Activated CD8-positive, alpha-beta T cell treated with anti-CD3 and anti-CD28 coated beads for 36 hours (primary cell): ENCODE measurements at regions of chr1 and their contacts with region 1.

Region 1: GRCh38 chr1:43650310-43651085 is 549 bp downstream of the KDM4A start:
- DNase-seq: peak; percentile 98
- ATAC-seq: peak; percentile 81
- H3K4me3 Mint-ChIP-seq: peak overlapping the region; percentile 100
- H3K27ac Mint-ChIP-seq: peak overlapping the region; percentile 94
- H3K4me1 Mint-ChIP-seq: peaks cover 26% of the 10 kb centered on the region
- H3K27me3 Mint-ChIP-seq: peaks cover 1% of the 10 kb centered on the region
- CTCF ChIP-seq: no peak

Region 2: DNA sequence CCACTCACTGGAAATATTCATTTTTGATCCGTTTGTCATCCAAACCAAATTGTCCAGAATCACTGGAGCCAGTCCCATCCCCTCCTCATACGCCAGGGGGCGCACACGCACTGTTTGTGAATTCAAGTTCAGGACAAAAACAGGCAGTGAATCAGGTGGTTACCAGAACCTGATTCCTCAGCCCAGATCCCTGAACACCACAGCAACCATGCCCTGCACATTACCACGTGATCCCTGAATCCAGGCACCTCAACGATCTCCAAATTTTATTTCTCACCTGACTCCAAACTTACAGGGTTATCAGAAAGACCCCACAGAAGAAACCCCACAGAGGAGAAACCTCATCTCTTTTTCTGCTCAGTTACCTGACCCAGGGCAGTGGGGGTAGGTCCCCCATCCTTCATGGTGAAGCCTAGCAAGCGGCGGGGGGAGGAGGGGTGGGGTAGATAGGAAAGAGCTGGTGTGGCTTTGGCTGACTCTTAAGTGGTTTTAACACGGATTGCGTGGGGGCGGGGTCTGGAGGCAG is 121.2 kb before region 1 on chr1:
- CTCF ChIA-PET with region 1: interaction called, 18 read pairs
- POLR2A ChIA-PET with region 1: interaction called, 4 read pairs
- intact Hi-C with region 1: no loop called
- DNase-seq: peak; percentile 89
- ATAC-seq: peak; percentile 81
- H3K4me3 Mint-ChIP-seq: no peak overlapping the region
- H3K27ac Mint-ChIP-seq: no peak overlapping the region
- H3K4me1 Mint-ChIP-seq: peaks cover 14% of the 10 kb centered on the region
- H3K27me3 Mint-ChIP-seq: peaks cover 34% of the 10 kb centered on the region
- CTCF ChIP-seq: peak; percentile 95

Region 3: DNA sequence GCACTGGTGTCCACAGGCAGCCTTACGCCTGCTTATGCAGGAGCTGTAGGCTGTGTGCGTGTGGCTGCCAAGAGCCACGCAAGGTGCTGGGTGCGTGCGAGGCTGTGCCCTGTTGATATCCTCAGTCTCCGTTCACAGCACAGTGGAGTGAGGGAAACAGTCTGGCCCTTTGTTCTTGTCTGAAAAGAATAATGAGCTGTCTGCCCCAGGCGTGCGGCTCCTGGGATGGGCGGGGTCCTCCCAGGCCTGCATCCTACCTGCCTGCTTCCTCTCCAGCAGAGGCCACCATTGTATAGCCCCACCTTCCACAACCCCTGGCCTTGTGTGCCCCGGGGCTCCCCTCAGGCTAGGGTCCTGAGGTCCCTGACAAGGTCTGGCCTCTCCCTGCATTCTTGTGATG is 47.5 kb before region 1 on chr1:
- CTCF ChIA-PET with region 1: no interaction called
- POLR2A ChIA-PET with region 1: no interaction called
- intact Hi-C with region 1: no loop called
- DNase-seq: no peak
- ATAC-seq: no peak
- H3K4me3 Mint-ChIP-seq: no peak overlapping the region
- H3K27ac Mint-ChIP-seq: no peak overlapping the region
- H3K4me1 Mint-ChIP-seq: no peaks in the 10 kb centered on the region
- H3K27me3 Mint-ChIP-seq: no peaks in the 10 kb centered on the region
- CTCF ChIP-seq: no peak

Region 4: GRCh38 chr1:43622471-43622870 is 28.0 kb before region 1 on chr1:
- CTCF ChIA-PET with region 1: no interaction called
- POLR2A ChIA-PET with region 1: no interaction called
- intact Hi-C with region 1: no loop called
- DNase-seq: no peak
- ATAC-seq: no peak
- H3K4me3 Mint-ChIP-seq: no peak overlapping the region
- H3K27ac Mint-ChIP-seq: no peak overlapping the region
- H3K4me1 Mint-ChIP-seq: no peaks in the 10 kb centered on the region
- H3K27me3 Mint-ChIP-seq: no peaks in the 10 kb centered on the region
- CTCF ChIP-seq: no peak

Region 5: GRCh38 chr1:43666608-43667007 is 16.1 kb after region 1 on chr1:
- CTCF ChIA-PET with region 1: interaction called, 5 read pairs
- POLR2A ChIA-PET with region 1: interaction called, 23 read pairs
- intact Hi-C with region 1: no loop called
- DNase-seq: no peak
- ATAC-seq: no peak
- H3K4me3 Mint-ChIP-seq: no peak overlapping the region
- H3K27ac Mint-ChIP-seq: no peak overlapping the region
- H3K4me1 Mint-ChIP-seq: peaks cover 12% of the 10 kb centered on the region
- H3K27me3 Mint-ChIP-seq: no peaks in the 10 kb centered on the region
- CTCF ChIP-seq: no peak

Region 6: DNA sequence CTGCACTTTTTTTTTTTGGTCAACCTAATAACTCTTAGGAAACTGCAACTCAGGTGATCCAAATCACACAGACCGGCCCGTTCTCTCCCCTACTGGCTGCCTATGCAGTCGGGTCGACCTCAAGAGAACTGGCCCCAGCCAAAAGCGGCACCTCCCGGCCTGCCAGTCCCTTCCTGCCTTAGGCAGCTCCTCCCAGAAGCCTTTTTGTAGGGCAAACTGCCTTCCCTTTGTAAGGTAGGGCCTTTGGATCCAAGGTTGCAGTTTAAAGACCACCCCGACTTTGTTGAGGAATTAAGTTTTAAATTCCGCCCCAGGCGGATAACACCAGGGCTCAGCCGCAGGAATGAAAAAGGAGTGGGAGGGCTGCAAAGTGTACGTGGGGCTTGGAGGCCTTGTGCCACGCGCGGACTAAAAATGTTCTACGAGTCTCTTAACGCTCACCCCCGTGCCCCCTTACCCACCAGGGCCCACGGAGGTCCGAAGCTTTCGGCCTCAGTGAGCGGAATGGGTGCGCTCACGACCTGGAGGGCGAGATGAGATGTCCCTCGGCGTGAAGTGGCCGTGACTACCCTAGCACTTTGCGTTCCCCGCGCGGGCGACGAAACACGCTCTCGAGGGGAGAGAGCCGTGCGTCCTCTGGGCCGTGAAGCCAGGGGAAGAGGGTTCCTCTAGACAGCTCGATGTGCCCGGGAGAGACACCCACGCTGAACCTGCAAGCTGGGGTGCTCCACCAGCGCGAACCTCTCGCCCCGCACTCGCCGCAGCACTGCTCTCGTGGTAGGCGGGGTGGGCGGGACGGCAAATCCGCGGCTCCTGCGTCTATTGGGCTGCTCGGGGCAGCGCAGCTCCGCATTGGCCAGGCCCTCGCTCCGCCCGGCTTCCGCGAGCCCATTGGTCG is 56.3 kb after region 1 on chr1:
- CTCF ChIA-PET with region 1: no interaction called
- POLR2A ChIA-PET with region 1: interaction called, 24 read pairs
- intact Hi-C with region 1: no loop called
- DNase-seq: peak; percentile 94
- ATAC-seq: peak; percentile 98
- H3K4me3 Mint-ChIP-seq: peak overlapping the region; percentile 81
- H3K27ac Mint-ChIP-seq: peak overlapping the region; percentile 82
- H3K4me1 Mint-ChIP-seq: peaks cover 31% of the 10 kb centered on the region
- H3K27me3 Mint-ChIP-seq: no peaks in the 10 kb centered on the region
- CTCF ChIP-seq: no peak

Region 7: DNA sequence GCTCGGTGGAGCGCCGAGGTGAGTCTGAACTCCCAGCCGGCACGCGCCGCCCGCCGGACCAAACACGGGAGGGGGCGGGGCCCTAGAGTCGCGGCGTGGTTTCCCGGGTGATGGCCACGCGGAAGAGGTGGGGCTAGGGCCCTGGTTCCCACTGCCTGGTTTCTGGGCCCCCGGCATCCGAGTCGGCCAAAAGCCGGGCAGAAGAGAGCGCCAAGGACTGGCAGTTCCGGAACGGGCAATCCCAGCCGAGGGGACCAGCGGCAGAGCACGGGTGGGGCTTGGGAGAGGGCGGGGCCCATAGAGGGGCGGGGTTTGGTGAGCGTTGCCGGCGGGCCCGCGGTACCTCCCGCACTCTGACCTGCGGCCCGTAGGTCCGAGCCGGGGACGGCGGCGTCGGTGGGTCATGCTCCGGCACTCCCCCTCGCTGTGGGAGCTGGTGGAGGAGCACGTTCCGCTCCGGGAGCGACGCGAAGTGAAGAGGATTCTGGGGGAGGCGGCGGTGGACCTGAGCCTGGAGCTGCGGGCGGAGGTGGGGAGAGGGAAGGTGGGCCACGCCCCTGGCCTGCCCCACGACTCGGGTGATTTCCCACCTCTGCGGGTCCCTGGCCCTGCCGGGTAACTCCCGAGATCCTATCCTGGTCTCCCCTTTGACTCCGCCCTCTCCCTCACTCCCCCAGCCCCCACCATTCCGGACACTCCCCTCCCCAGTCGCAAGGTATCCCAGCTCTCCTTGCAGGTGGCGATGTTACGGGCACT is 341.2 kb after region 1 on chr1 and contains the start of gene CCDC24:
- CTCF ChIA-PET with region 1: no interaction called
- POLR2A ChIA-PET with region 1: no interaction called
- intact Hi-C with region 1: no loop called
- DNase-seq: peak; percentile 81
- ATAC-seq: peak; percentile 87
- H3K4me3 Mint-ChIP-seq: peak within 1 kb of the TSS; percentile 80
- H3K27ac Mint-ChIP-seq: peak within 1 kb of the TSS; percentile 59
- H3K4me1 Mint-ChIP-seq: peaks cover 12% of the 10 kb centered on the region
- H3K27me3 Mint-ChIP-seq: no peaks in the 10 kb centered on the region
- CTCF ChIP-seq: no peak
- total RNA-seq, gene CCDC24: 1.4 to 1.8 TPM